Right cardiac atrium (tissue), 5 donors: ENCODE measurements at regions of chr7 and their contacts with region 1.

Region 1: GRCh38 chr7:74401137-74401859 is 52.4 kb upstream of the GTF2IRD1 start:
- DNase-seq: peak; percentile 67 to 87 (median 82)
- ATAC-seq: peak; percentile 50 to 58
- H3K4me3 ChIP-seq: no peak overlapping the region
- H3K27ac ChIP-seq: no peak overlapping the region
- H3K4me1 ChIP-seq: no peaks in the 10 kb centered on the region
- H3K27me3 ChIP-seq: no peaks in the 10 kb centered on the region

Region 2: DNA sequence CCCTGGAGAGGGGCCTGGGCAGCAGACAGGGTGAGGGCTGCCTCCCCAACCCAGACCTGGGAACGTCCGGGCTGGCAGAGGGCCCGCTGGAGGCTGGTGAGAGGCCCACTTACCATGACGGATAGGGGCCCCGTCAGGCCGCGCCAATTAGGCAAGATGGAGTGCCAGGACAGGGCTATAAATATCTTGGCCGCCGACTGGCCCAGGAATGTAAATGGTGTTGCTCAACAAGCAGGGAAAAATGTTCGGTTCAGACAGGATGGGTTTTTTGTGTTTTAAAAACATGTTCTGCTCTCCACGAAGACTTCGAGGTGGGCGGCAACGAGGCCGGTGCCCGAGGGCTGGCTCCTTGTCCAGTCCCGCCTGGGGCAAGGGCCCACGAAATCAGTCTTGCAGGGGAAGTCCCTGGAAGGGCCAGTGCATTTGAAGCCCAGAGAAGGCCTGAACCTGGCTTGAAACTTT is 409.2 kb before region 1 on chr7:
- intact Hi-C with region 1: no loop called
- DNase-seq: peak; percentile 75 to 88 (median 87)
- ATAC-seq: peak; percentile 50 to 68
- H3K4me3 ChIP-seq: no peak overlapping the region
- H3K27ac ChIP-seq: peak overlapping the region; percentile 13
- H3K4me1 ChIP-seq: peaks cover 2% of the 10 kb centered on the region
- H3K27me3 ChIP-seq: no peaks in the 10 kb centered on the region

Region 3: GRCh38 chr7:74061840-74062539 is 339.3 kb before region 1 on chr7:
- intact Hi-C with region 1: loop called in 2 of 4 experiments (anchors 5 to 10 kb)
- DNase-seq: peak; percentile 89 to 92 (median 91)
- ATAC-seq: peak; percentile 92 to 93
- H3K4me3 ChIP-seq: no peak overlapping the region
- H3K27ac ChIP-seq: peak overlapping the region; percentile 50
- H3K4me1 ChIP-seq: no peaks in the 10 kb centered on the region
- H3K27me3 ChIP-seq: no peaks in the 10 kb centered on the region

Region 4: GRCh38 chr7:74083117-74083876 is 318.0 kb before region 1 on chr7 and contains the start of gene LIMK1:
- intact Hi-C with region 1: loop called in 1 of 4 experiments (anchors 10 kb)
- DNase-seq: peak; percentile 81 to 94 (median 92)
- ATAC-seq: peak; percentile 86 to 93
- H3K4me3 ChIP-seq: peak within 1 kb of the TSS; percentile 100
- H3K27ac ChIP-seq: no peak within 1 kb of the TSS
- H3K4me1 ChIP-seq: peaks cover 6% of the 10 kb centered on the region
- H3K27me3 ChIP-seq: no peaks in the 10 kb centered on the region
- total RNA-seq, gene LIMK1: 10.4 to 13.5 (median 11.9) TPM

Region 5: DNA sequence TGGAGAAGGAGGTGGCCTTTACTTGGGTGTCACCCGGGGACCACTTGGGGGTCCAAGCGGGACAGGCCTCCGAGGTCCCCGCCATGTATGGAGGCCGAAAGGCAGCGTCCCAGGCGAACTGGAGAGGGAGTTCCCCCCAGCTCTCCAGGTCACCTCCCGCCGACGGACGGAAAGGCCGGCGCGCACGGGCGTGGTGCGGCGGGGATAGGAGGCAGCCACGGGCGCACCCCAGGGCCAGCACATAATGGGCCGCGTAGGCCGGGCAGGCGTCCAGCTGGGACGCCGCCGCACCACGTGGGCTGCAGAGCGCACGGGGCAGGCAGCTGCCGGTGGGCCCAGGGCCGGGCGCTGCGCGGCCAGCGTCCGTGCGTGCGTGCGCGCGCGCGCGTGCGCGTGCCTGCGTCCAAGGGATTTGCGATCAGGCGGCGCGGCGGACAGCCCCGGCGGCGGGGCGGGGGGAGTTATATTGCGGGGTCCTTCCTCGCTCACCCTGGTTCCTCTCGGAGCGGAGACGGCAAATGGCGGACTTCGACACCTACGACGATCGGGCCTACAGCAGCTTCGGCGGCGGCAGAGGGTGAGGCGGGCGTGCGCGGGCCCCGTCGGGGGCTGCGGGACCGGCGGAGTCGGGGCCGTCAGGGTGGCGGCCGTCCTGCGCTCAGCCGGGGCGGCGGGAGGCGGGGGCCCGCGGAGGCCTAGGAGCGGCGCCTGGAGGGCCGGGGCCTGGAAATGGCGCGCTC is 227.3 kb before region 1 on chr7 and contains the start of gene EIF4H:
- intact Hi-C with region 1: no loop called
- DNase-seq: peak; percentile 97 to 99 (median 99)
- ATAC-seq: peak; percentile 98 to 99
- H3K4me3 ChIP-seq: peak within 1 kb of the TSS; percentile 57
- H3K27ac ChIP-seq: peak within 1 kb of the TSS; percentile 71
- H3K4me1 ChIP-seq: peaks cover 4% of the 10 kb centered on the region
- H3K27me3 ChIP-seq: no peaks in the 10 kb centered on the region
- total RNA-seq, gene EIF4H: 186 to 223 (median 202) TPM

Region 6: GRCh38 chr7:74289659-74290514 is 111.4 kb before region 1 on chr7:
- intact Hi-C with region 1: loop called in 1 of 4 experiments (anchors 10 kb)
- DNase-seq: peak; percentile 59 to 86 (median 82)
- ATAC-seq: peak; percentile 30 to 31
- H3K4me3 ChIP-seq: peak overlapping the region; percentile 96
- H3K27ac ChIP-seq: no peak overlapping the region
- H3K4me1 ChIP-seq: peaks cover 6% of the 10 kb centered on the region
- H3K27me3 ChIP-seq: no peaks in the 10 kb centered on the region